ENCODE measurements at regions of chr17 and their contacts with region 1.

Region 1: GRCh38 chr17:35022536-35023063 is 40.9 kb downstream of the RFFL start:
- DNase-seq: peak; percentile 63
- H3K4me3 Mint-ChIP-seq: peak overlapping the region; percentile 70
- H3K27ac Mint-ChIP-seq: peak overlapping the region; percentile 99
- H3K4me1 Mint-ChIP-seq: peaks cover 30% of the 10 kb centered on the region
- H3K27me3 Mint-ChIP-seq: no peaks in the 10 kb centered on the region

Region 2: GRCh38 chr17:35073991-35074627 is 51.5 kb after region 1 on chr17:
- intact Hi-C with region 1: loop called (anchors 2 kb)
- DNase-seq: no peak
- H3K4me3 Mint-ChIP-seq: peak overlapping the region; percentile 35
- H3K27ac Mint-ChIP-seq: peak overlapping the region; percentile 78
- H3K4me1 Mint-ChIP-seq: peaks cover 53% of the 10 kb centered on the region
- H3K27me3 Mint-ChIP-seq: no peaks in the 10 kb centered on the region

Measured in activated T-helper 2 cell treated with anti-CD3 and anti-CD28 coated beads, Interferon-gamma antibody, Interleukin-2, Interleukin-4, amounts not matched to agents 10 μg/mL and 5 μg/mL and 100 μg/mL, durations not matched to agents 14 hours and 24 hours and 36 hours (primary cell).